ENCODE measurements at regions of chr17 and their contacts with region 1.

Region 1: DNA sequence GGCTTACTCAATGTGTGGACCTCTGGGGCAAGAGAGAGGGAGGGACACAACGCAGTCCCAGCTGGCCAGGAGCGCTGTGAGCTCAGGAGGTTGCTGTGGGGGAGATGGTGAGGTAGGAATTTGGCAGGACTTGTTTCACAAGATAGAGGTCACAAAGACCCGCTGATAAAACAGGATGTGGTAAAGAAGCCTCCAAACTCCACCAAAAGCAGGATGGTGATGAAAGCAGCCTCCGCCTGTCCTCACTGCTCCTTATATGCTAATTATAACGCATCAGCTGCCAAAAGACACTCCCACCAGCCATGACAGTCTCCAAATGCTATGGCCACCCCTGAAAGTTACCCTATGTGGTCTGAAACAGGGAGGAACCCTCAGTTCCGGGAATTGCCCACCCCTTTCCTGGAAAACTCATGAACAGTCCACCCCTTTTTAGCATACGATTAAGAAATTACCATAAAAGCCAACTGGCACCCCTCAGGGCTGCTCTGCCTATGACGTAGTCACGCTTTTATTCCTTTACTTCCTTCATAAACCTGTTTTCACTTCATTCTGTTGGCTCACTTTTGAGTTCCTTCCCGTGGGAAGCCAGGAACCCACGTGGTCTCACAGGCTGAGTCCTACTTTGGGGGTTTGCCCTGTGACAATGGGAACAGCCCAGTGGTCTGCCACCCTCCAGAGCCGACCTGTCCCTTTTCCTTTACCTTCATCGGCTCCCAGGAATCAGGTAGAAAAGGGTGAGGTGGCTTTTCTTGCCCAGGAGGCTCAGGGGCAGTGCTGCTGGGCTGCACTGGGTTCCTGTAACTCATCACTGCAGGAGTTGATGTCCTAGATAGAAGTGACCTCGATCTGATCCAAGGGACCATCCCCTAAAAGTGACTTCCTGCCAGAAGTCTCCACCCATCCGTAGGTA is 5.4 kb upstream of the EIF4A3 start:
- DNase-seq: no peak

Region 2: DNA sequence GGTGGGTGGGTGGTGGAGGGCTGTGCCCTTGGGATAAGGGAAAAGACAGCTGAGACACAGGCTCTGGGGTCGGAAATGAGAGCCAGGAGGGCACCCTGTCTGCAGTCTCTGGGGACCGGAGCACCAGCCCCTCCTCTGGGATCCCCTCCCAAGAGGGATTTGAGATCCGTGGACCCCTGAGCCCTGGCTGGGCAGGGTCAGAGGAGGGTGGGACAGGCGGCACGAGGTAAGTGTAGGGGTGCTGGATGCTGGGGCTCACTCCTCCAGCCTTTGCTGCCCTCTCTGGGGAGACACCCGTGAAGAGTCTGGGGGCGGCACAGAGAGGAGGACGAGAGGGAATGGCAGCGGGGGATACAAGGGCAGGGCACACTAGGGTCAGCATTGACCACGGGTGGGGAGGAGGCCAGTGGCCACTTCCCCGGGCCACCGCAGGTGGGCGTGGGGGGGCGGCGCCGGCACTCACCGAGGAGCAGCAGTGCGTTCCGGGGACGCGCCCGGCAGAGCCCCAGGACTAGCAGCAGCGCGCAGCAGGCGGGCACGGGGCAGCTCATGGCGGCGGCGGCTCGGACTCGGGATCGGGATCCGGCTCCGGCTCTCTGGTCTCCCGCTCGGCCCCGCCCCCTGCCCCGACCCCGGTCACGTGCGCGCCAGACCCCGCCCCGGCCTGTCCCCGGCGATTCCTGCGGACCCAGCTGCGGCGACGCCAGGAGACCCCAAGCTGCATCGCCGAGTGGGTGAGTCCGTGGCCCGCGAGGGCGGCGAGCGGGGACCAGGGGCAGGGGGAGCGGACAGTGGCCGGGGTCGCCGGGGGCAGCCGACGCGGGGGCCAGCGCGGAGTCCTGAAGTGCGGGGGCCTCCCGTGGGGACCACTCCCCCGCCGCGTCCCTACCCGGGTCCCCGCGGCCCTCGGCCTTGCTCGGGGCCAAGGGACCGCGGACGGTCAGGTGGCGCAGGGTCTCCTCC is 67.7 kb after region 1 on chr17 and contains the starts of genes SGSH and SLC26A11:
- intact Hi-C with region 1: loop called in 1 of 2 experiments (anchors 5 kb)
- DNase-seq: peak; percentile 93
- total RNA-seq, gene SGSH: 34.0 to 38.8 TPM
- total RNA-seq, gene SLC26A11: 10.0 to 11.9 TPM

Region 3: DNA sequence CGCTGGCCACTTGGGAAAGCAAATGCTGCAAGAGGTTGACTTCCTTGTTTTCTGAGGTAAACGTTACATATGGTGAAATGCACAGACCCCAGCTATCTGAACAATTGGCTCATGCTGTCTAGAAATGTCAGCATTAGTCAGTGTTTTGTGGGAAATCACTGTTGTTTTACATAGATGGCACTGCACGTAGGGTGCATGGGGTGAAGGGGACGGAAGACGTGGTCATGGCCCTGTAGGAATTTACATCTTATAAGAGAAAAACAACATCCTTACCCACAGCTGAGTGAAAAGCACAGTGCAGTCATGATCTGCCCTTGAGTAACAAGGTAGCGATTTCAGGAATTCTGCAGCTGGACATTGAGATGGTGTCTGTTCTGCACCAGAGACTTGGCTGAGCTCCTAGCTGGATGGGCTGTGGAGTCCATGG is 407.5 kb after region 1 on chr17:
- intact Hi-C with region 1: no loop called
- DNase-seq: no peak

Region 4: DNA sequence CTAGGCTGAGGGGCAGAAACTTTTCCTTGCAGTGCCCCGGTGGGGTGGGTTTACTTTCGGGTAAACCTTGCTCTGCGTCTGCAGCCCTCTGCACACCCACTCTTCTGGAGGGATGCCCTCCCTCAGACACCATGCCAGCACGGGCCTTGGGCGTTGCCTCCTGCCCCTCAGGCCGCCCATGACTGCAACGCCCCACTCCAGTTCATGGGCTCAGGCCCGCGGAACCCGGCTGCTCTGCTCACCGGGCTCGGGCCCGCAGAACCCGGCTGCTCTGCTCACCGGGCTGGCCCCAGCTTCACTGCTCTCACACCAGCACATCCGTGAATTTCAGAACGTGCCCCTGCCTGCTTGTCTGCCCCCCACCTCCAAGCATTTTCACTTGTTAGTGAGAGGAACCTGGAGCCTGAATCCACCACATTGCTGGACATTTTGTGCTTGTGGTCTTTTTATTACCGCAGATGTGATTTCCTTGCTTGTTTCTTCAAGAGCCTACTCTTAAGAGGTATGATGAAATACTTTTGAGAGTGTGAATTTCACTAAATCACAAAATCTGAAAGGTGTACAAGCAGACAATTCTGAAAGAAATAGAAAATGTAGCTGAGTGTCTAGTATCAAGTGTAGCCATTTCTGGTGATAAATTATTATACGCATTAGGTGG is 523.2 kb after region 1 on chr17:
- intact Hi-C with region 1: no loop called
- DNase-seq: peak; percentile 26

Region 5: DNA sequence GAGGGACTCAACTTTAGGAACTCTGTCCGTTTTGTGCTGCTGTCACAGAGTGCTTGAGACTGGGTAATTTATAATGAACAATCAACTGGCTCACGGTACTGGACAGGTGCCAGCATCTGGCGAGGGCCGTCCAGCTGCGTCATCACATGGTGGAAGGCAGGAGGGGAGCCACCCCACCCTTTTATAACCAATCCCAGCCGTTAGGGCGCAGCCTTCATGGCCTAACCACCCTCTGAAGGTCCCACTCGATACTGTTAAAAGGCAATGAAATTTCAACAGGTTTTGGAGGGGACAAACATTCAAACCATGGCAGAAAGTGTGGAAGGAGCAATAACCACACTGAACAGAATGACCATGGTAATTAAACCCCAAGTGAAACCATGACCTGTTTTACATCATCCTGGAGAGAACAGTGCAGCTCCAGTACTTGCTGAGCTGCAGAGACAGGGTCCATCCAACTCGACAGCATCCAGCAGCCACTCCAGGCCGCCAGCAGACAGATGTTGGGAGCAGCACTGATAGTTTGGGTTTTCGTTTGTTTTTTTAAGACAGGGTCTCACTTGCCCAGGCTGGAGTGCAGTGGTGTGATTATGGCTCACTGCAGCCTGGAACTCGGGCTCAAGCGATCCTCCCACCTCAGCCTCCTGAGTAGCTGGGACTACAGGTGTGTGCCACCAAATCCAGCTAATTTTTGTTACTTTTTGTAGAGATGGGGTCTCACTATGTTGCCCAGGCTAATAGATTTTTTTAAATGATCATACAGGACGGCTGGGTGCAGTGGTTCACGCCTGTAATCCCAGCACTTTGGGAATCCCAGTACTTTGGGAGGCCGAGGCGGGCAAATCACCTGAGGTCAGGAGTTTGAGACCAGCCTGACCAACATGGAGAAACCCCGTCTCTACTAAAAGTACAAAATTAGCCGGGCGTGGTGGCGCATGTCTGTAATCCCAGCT is 850.3 kb after region 1 on chr17:
- intact Hi-C with region 1: no loop called
- DNase-seq: no peak

Measured in posterior vena cava (tissue), 2 donors.